ENCODE measurements at regions of chr10 and their contacts with region 1.

Region 1: GRCh38 chr10:59830601-59831259 is 75.6 kb downstream of the CCDC6 start:
- DNase-seq: peak; percentile 20
- H3K4me3 ChIP-seq: no peak overlapping the region
- H3K27ac ChIP-seq: no peak overlapping the region
- H3K27me3 ChIP-seq: no peaks in the 10 kb centered on the region
- CTCF ChIP-seq: peak; percentile 91

Region 2: GRCh38 chr10:59448616-59449015 is 382.1 kb before region 1 on chr10:
- CTCF ChIA-PET with region 1: no interaction called
- POLR2A ChIA-PET with region 1: no interaction called
- DNase-seq: no peak
- H3K4me3 ChIP-seq: no peak overlapping the region
- H3K27ac ChIP-seq: no peak overlapping the region
- H3K27me3 ChIP-seq: no peaks in the 10 kb centered on the region
- CTCF ChIP-seq: no peak

Region 3: DNA sequence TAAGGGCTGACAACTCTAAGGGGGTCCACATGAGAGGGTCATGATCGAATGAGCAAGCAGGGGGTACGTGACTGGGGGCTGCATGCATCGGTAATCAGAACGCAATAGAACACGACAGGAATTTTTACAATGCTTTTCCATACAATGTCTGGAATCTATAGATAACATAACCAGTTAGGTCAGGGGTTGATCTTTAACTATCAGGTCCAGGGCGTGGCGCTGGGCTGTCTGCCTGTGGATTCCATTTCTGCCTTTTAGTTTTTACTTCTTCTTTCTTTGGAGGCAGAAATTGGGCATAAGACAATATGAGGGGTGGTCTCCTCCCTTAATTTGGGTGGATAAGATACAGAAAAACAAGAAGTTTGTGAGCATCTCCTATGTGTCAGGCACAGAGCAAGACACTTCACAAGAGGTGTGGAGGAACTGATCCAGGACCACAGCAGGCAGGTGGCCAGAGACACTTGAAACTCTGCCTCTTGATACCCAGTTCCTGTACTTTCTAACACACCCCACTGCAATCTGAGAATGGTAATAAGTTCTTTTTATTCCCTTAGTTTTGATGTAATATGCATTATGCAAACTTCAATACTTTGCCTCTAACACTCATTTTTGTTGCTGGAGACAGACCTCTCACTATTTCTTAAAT is 59.4 kb before region 1 on chr10:
- CTCF ChIA-PET with region 1: no interaction called
- POLR2A ChIA-PET with region 1: no interaction called
- DNase-seq: no peak
- H3K4me3 ChIP-seq: no peak overlapping the region
- H3K27ac ChIP-seq: no peak overlapping the region
- H3K27me3 ChIP-seq: no peaks in the 10 kb centered on the region
- CTCF ChIP-seq: no peak

Region 4: GRCh38 chr10:59793919-59794318 is 36.8 kb before region 1 on chr10:
- CTCF ChIA-PET with region 1: interaction called, 10 read pairs
- POLR2A ChIA-PET with region 1: no interaction called
- DNase-seq: no peak
- H3K4me3 ChIP-seq: no peak overlapping the region
- H3K27ac ChIP-seq: no peak overlapping the region
- H3K27me3 ChIP-seq: no peaks in the 10 kb centered on the region
- CTCF ChIP-seq: no peak

Region 5: GRCh38 chr10:59817773-59818172 is 13.0 kb before region 1 on chr10:
- CTCF ChIA-PET with region 1: interaction called, 25 read pairs
- POLR2A ChIA-PET with region 1: no interaction called
- DNase-seq: no peak
- H3K4me3 ChIP-seq: no peak overlapping the region
- H3K27ac ChIP-seq: no peak overlapping the region
- H3K27me3 ChIP-seq: no peaks in the 10 kb centered on the region
- CTCF ChIP-seq: no peak

Region 6: DNA sequence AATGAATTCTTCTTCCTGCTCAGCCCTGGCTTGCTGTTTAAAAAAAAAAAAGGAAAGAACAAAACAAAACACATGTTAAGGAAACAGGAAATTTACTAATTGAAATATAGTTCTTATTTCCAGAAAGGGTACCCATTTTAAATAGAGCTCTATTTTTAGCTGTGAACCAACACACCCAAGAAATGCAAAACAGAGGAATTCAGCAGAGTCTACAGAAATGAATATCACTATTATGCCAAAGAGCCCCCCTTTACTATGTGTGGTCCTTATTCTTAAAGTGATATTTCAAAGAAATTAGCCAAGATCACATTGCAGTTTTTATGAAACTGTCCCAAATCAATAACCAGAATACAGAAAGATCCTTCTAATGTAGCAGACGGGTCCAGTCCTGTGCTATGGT is 21.9 kb after region 1 on chr10:
- CTCF ChIA-PET with region 1: interaction called, 22 read pairs
- POLR2A ChIA-PET with region 1: no interaction called
- DNase-seq: no peak
- H3K4me3 ChIP-seq: no peak overlapping the region
- H3K27ac ChIP-seq: no peak overlapping the region
- H3K27me3 ChIP-seq: no peaks in the 10 kb centered on the region
- CTCF ChIP-seq: no peak

Region 7: GRCh38 chr10:59872892-59873463 is 42.2 kb after region 1 on chr10:
- CTCF ChIA-PET with region 1: interaction called, 29 read pairs
- POLR2A ChIA-PET with region 1: no interaction called
- DNase-seq: peak; percentile 95
- H3K4me3 ChIP-seq: peak overlapping the region; percentile 42
- H3K27ac ChIP-seq: peak overlapping the region; percentile 93
- H3K27me3 ChIP-seq: no peaks in the 10 kb centered on the region
- CTCF ChIP-seq: no peak

Region 8: DNA sequence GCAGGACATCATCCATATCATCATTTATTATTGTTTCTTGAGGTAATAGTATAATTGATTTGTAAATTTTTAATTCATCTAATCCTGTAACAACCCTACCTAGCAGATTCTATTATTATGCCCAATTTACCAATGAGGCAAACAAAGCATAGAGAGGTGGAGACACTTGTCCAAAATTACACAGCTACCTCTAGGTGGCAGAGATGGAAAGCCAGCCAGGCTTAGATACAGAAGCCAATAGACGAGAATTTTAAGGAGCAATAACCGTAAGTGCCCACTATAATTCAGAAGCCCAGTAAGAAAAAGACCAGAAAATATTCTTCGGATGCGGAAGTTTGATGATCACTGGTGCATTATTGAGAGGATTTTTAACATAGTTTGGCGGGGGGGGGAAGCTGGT is 505.0 kb after region 1 on chr10:
- CTCF ChIA-PET with region 1: no interaction called
- POLR2A ChIA-PET with region 1: no interaction called
- DNase-seq: no peak
- H3K4me3 ChIP-seq: no peak overlapping the region
- H3K27ac ChIP-seq: no peak overlapping the region
- H3K27me3 ChIP-seq: no peaks in the 10 kb centered on the region
- CTCF ChIP-seq: 0 out of 2 replicates have a peak, but pooled peaks have one; percentile 15

Measured in AG04450 (cell line).